ENCODE measurements at regions of chr10 and their contacts with region 1.

Region 1: DNA sequence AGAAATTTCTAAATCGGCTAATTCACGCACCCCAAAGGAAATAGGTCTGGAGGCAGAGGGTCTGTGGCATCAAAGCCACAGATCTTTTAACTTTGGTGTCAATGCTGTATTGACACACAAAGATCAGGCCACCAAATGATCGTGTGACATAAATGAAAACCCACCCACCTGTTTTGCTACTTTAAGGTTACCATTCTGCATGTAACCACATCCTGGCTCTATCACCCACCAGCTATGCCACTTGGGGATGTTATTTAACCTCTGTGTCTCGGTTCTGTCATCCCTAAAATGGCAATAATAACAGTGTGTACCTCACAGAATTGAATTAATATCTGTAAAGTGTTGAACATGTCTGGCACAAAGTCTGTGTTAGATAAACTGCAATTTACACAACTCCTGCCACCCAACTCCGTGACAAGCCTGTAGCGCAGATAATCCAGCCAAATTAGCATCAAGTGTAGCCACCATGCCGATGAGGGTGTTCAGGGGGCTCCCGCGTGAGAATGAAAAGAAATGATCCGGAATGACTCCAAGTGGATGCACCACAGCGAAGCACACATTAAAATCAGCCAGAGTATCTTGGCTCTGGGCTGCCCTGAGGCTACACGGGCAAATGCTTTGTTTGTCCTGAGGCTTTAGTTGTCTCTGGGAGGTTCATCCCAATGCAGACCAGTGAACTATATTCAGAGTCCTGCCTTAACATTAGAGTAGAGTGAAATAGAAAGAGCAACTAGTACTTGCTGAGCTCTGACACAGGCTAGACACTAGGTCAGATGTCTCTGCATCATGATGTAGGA is 158.4 kb upstream of the NEBL start:
- DNase-seq: no peak

Region 2: DNA sequence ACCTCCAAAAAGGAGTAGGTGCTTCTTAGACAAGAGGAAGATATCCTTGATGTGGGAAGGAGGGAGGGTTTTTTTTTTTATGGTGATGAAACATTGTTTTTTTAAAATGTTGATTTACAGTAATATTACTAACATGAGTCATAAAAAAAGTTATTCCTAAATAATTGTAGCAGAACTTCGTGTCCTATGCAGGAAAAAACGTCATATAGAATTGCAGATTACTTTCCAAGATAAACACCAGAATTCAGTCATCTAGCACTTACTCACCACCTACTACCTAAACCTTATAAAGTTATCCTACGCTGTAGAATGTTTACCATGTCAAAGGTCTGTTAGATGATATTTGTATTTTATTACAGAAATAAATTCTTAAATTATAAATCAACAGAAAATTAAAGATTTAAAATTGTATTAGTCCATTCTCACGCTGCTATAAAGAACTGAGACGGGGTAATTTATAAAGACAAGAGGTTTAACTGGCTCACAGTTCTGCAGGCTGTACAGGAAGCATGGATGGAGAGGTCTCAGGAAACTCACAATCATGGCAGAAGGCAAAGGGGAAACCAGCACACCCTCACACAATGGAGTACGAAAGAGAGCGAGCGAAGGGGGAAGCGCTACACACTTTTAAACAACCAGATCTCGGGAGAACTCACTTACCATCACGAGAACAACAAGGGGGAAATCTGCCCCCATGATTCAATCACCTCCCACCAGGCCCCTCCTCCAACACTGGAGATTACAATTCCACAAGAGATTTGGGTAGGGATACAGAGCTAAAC is 53.2 kb before region 1 on chr10:
- in situ Hi-C with region 1: loop called (anchors 10 kb)
- DNase-seq: peak; percentile 34

Region 3: GRCh38 chr10:21138769-21139340 is 83.3 kb after region 1 on chr10:
- in situ Hi-C with region 1: no loop called
- DNase-seq: no peak

Measured in G401 (cell line).